ENCODE measurements at regions of chr17 and their contacts with region 1.

Region 1: DNA sequence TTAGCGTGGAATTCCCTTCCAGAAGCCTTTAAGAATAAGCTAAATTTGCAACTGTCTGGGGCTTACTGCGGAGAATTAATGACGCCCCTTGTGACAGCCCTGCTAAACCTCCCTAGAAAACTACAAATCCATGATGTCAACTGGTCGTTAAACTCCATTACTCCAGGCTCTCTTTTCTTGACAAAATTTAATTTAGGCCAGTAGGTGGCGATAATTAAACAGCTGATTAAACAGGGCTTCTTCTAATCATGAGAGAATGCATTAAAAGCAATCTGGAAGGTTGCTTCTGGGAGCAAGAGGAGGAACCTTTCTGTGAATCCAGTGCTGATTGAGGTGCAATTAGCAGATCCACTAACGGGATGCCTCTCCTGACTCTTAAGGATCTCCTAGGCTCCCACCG is 8.1 kb upstream of the NLRP1 start:
- DNase-seq: peak; percentile 51
- CTCF ChIP-seq: peak; percentile 64

Region 2: DNA sequence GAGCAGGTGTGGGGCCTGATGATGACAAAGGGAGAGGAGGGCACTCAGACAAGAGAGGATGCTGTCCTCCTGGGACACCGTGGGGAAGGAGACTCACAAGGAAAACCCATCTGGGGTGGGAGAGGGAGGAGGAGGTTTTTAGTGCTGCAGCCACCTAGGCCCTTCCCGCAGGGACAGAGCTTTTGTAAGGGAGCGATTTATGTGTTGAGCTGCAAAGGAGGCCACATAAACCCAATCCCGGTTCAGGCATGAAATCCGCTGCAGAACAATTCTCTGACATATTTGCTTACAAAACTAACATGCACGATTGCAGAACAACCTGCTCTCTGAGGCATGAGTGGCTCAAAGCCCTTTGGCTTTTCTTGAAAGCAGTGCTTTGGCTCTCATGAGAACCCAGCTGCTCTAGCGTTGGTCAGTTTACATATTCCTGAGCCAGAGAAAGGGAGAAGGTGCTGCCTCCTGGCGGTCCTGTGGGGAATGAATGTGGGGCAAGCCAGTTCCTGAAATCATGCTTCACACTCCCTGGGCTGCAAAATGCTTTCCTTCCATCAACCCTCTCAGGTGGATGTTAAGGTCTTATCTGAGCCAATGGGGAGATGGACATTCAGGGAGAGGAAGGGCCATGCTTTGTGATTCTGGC is 114.3 kb after region 1 on chr17:
- CTCF ChIA-PET with region 1: interaction called, 45 read pairs
- POLR2A ChIA-PET with region 1: no interaction called
- DNase-seq: peak; percentile 73
- CTCF ChIP-seq: peak; percentile 63

Region 3: DNA sequence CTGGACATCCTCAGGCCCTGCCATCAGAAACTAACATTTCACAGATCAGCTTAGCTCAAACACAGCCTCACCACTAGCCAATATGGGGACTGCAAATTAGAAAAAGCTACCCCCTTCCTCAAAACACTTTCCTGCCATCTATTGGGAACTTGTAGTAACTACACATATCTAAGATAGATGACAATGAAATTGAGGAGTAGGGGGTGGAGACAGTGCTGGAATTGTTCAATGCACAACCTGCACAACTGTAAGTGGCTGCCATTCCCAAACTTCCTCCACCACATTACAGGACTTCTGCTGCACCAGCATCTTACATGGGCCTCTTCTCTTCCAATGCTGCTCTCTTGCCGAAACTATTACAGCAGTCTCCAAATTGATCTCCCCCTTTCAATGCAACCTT is 820.7 kb after region 1 on chr17:
- CTCF ChIA-PET with region 1: interaction called, 13 read pairs
- POLR2A ChIA-PET with region 1: no interaction called
- DNase-seq: peak; percentile 60
- CTCF ChIP-seq: peak; percentile 41

Region 4: GRCh38 chr17:6421700-6422604 is 829.6 kb after region 1 on chr17:
- CTCF ChIA-PET with region 1: interaction called, 33 read pairs
- POLR2A ChIA-PET with region 1: no interaction called
- DNase-seq: peak; percentile 85
- CTCF ChIP-seq: peak; percentile 87

Region 5: DNA sequence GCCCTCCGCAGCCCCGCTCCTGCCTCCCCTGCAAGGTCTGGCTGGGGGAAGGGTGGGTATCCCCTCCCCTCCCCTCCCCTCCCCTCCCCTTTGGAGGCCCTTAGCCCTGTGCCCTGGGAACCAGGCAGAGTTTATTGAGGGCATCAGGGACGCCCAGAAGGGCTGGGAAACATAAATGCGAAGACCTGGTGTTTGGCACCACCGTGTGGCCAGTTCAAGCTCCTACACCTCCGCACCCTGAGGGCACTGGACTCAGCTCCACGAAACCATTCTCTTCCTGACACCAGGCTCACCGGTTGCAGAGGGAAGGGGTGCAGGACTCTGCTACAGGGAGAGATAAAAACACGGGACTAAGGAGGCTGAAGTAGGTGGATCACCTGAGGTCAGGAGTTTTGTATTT is 843.6 kb after region 1 on chr17:
- CTCF ChIA-PET with region 1: interaction called, 23 read pairs
- POLR2A ChIA-PET with region 1: no interaction called
- DNase-seq: peak; percentile 84
- CTCF ChIP-seq: peak; percentile 86

Region 6: GRCh38 chr17:6443692-6444569 is 851.5 kb after region 1 on chr17 and contains the start of gene PIMREG:
- CTCF ChIA-PET with region 1: interaction called, 14 read pairs
- POLR2A ChIA-PET with region 1: no interaction called
- DNase-seq: peak; percentile 97
- CTCF ChIP-seq: no peak

Measured in GM10248 (cell line).